Activated CD4-positive, alpha-beta memory T cell treated with anti-CD3 and anti-CD28 coated beads for 36 hours (primary cell): ENCODE measurements at regions of chr17 and their contacts with region 1.

Region 1: DNA sequence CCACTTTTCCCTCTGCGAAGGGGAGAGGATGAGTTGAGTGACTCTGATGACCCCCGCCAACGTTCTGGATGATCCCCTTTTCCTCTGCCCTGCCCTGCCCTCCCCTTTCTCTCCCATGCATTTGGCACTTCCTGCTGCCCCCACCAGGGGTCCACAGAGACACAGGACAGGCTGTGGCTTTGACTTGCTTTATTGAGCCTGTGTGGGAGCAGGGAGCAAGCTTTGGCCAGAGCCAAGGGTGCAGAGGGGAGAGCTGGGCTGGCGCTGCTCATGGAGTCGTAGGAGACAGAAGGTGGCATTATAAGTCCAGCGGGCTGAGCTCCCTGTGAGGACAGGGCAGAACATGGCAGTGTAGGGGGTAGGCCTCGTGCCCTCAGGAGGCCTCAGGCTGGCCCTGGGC is 1.6 kb downstream of the PPY start:
- DNase-seq: peak; percentile 30
- H3K4me3 Mint-ChIP-seq: no peak overlapping the region
- H3K27ac Mint-ChIP-seq: no peak overlapping the region
- H3K4me1 Mint-ChIP-seq: peaks cover 17% of the 10 kb centered on the region
- H3K27me3 Mint-ChIP-seq: peaks cover 4% of the 10 kb centered on the region

Region 2: GRCh38 chr17:43170766-43171585 is 769.7 kb before region 1 on chr17 and contains the start of gene NBR1:
- CTCF ChIA-PET with region 1: no interaction called
- POLR2A ChIA-PET with region 1: no interaction called
- intact Hi-C with region 1: no loop called
- DNase-seq: peak; percentile 99
- H3K4me3 Mint-ChIP-seq: no peak within 1 kb of the TSS
- H3K27ac Mint-ChIP-seq: no peak within 1 kb of the TSS
- H3K4me1 Mint-ChIP-seq: peaks cover 25% of the 10 kb centered on the region
- H3K27me3 Mint-ChIP-seq: no peaks in the 10 kb centered on the region
- total RNA-seq, gene NBR1: 62.0 to 65.9 TPM

Region 3: DNA sequence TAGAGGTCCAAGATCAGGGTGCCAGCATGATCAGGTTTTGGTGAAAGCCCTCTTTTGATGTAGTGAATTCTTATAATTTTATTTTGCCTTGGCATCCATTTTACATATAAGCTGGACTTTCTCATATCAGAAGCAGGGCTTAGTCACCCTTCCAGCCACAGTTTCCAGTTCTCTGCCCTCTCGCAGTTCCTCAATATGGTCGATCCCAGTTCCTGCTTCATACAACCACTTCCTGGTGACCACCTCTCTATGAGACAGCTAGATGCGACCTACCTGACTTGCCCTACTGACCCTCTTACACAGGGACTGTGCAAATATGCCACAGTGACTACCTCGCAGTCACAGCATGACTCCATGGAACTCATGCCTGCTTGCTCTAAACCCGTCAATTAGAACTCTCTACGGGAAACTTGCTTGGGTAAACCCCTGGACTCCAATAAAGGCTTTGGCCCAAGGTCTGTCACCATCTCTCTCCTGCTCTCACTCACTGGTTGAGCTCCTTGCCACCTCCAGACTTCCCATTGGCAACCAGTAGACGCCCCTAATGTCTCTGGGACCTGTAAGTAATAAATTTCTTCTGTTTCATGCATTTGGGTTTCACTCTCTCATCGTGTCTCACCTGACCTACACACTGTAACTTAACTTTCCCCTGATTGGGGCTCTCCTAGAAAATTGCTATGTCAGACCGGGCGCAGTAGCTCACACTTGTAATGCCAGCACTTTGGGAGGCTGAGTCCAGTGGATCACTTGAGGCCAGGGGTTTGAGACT is 72.2 kb before region 1 on chr17:
- CTCF ChIA-PET with region 1: no interaction called
- POLR2A ChIA-PET with region 1: no interaction called
- intact Hi-C with region 1: no loop called
- DNase-seq: no peak
- H3K4me3 Mint-ChIP-seq: no peak overlapping the region
- H3K27ac Mint-ChIP-seq: no peak overlapping the region
- H3K4me1 Mint-ChIP-seq: no peaks in the 10 kb centered on the region
- H3K27me3 Mint-ChIP-seq: peaks cover 15% of the 10 kb centered on the region

Region 4: GRCh38 chr17:43878260-43879175 is 62.1 kb before region 1 on chr17:
- CTCF ChIA-PET with region 1: interaction called, 14 read pairs
- POLR2A ChIA-PET with region 1: no interaction called
- intact Hi-C with region 1: no loop called
- DNase-seq: peak; percentile 76
- H3K4me3 Mint-ChIP-seq: no peak overlapping the region
- H3K27ac Mint-ChIP-seq: no peak overlapping the region
- H3K4me1 Mint-ChIP-seq: no peaks in the 10 kb centered on the region
- H3K27me3 Mint-ChIP-seq: no peaks in the 10 kb centered on the region

Region 5: DNA sequence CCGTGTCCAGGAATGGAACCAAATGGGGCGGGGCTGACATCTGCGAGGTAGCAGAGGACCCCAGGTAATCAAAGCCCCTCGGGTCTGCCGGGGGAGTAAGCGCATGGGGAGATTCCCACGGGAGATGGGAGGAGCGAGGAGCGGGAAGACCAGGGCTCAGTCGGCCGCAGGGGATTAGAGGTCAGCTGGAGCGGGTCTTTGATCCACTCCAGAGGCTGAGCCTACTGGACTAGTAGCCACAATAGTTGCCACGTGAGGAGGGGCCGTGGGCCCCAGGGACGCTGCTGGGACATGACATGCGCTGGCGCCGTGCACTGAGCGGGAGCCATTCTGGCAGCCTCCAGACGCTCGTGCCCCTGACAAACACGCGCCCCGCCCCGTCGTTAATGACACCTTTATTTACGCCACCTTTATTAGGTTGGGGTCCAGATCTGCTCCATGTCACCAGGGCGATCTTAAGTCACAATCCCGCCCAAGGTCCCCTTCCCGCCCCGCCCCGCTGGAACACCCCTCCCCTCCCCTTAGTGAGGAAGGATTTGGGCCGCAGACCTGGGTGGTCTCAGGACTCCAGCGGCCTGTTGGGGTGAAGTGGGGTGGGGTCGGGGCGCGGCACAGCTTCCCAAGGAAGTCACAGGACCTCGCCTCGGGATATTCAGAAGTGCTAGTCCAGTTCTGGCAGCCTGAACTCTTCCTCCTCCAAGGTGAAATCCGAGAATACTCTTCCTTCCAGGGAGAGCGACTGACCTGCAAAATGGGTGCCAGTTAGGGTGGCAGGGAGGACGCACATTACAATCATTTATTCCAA is 13.4 kb before region 1 on chr17:
- CTCF ChIA-PET with region 1: interaction called, 28 read pairs
- POLR2A ChIA-PET with region 1: no interaction called
- intact Hi-C with region 1: no loop called
- DNase-seq: no peak
- H3K4me3 Mint-ChIP-seq: peak overlapping the region; percentile 68
- H3K27ac Mint-ChIP-seq: no peak overlapping the region
- H3K4me1 Mint-ChIP-seq: peaks cover 28% of the 10 kb centered on the region
- H3K27me3 Mint-ChIP-seq: peaks cover 7% of the 10 kb centered on the region

Region 6: GRCh38 chr17:43994272-43995149 is 53.9 kb after region 1 on chr17:
- CTCF ChIA-PET with region 1: interaction called, 90 read pairs
- POLR2A ChIA-PET with region 1: no interaction called
- intact Hi-C with region 1: loop called (anchors 1 kb)
- DNase-seq: peak; percentile 79
- H3K4me3 Mint-ChIP-seq: no peak overlapping the region
- H3K27ac Mint-ChIP-seq: no peak overlapping the region
- H3K4me1 Mint-ChIP-seq: no peaks in the 10 kb centered on the region
- H3K27me3 Mint-ChIP-seq: peaks cover 12% of the 10 kb centered on the region

Region 7: GRCh38 chr17:44044067-44044466 is 103.4 kb after region 1 on chr17:
- CTCF ChIA-PET with region 1: interaction called, 52 read pairs
- POLR2A ChIA-PET with region 1: no interaction called
- intact Hi-C with region 1: loop called (anchors 1 kb)
- DNase-seq: no peak
- H3K4me3 Mint-ChIP-seq: no peak overlapping the region
- H3K27ac Mint-ChIP-seq: no peak overlapping the region
- H3K4me1 Mint-ChIP-seq: peaks cover 14% of the 10 kb centered on the region
- H3K27me3 Mint-ChIP-seq: no peaks in the 10 kb centered on the region

Region 8: DNA sequence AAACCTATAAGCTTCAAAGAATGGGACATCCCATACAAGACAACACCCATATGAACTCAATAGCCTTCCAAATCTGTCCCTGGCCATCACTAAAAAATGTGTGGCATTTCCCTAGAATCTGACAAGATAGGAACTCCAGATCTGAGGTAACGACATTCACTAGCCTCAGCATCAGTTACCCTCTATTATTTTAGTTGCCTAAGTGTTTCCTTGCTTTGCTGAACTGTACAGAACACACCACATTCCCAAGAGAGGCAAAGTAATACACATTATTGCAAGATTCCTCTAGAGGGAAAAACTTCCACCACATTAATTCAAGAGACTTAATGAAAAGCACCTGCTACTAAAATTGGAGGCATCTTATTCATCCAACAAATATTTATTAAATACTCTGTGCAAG is 120.8 kb after region 1 on chr17:
- CTCF ChIA-PET with region 1: no interaction called
- POLR2A ChIA-PET with region 1: no interaction called
- intact Hi-C with region 1: no loop called
- DNase-seq: no peak
- H3K4me3 Mint-ChIP-seq: no peak overlapping the region
- H3K27ac Mint-ChIP-seq: no peak overlapping the region
- H3K4me1 Mint-ChIP-seq: peaks cover 51% of the 10 kb centered on the region
- H3K27me3 Mint-ChIP-seq: no peaks in the 10 kb centered on the region